Upper lobe of right lung (tissue), 1 donor: ENCODE measurements at regions of chr1 and their contacts with region 1.

Region 1: GRCh38 chr1:175154629-175155472 is 37.7 kb downstream of the KIAA0040 start:
- DNase-seq: peak; percentile 82
- ATAC-seq: peak; percentile 86
- H3K4me3 ChIP-seq: no peak overlapping the region
- H3K27ac ChIP-seq: no peak overlapping the region
- H3K4me1 ChIP-seq: peaks cover 4% of the 10 kb centered on the region
- H3K27me3 ChIP-seq: peaks cover 4% of the 10 kb centered on the region
- CTCF ChIP-seq: peak; percentile 91

Region 2: DNA sequence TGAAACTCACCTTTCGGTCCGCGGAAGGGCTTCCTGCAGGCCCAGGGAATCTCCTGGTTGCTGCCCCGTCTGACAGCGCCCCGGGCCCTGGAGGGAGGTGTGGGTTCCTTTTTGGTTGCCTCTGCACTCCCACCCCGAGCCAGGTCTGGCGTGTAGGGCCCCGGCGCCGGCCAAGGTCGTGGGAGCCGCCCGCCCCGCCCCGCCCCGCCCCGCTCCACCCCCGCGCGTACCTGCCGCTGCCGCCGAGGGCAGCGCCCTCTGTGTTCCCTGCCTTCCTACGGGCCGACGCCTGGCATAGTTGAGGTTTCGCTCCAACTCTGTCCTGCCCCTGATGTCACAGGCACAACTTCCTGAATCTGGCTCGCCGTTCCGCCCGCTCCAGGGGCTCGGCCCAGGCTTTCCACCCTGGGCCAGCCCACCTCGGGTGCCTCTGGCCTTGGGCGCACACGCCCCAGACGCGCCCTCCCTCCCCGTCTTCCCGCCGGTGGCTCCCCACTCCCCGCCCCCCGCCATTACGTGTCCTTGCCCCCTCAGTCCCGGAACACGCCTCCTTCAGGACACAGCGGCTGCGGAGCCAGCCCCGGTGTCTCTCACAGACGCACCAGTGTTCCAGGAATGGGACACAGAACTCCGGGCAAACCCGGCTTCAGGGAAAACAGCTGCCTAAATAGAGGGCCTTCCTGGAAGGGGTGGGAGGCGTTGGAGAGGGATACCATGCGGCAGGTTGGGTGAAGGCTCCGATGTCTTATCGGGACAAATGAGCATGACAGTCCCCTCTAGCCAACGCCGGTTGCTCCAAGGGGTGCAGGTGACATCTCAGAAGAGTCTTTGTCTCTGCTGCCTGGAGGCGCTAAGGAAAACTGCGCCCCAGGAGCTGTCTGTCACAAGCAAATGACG is 38.0 kb after region 1 on chr1 and contains the start of gene KIAA0040:
- intact Hi-C with region 1: loop called (anchors 5 kb)
- DNase-seq: peak; percentile 91
- ATAC-seq: peak; percentile 94
- H3K4me3 ChIP-seq: peak within 1 kb of the TSS; percentile 90
- H3K27ac ChIP-seq: peak within 1 kb of the TSS; percentile 96
- H3K4me1 ChIP-seq: peaks cover 32% of the 10 kb centered on the region
- H3K27me3 ChIP-seq: no peaks in the 10 kb centered on the region
- CTCF ChIP-seq: peak; percentile 10
- total RNA-seq, gene KIAA0040: 44.8 TPM

Region 3: DNA sequence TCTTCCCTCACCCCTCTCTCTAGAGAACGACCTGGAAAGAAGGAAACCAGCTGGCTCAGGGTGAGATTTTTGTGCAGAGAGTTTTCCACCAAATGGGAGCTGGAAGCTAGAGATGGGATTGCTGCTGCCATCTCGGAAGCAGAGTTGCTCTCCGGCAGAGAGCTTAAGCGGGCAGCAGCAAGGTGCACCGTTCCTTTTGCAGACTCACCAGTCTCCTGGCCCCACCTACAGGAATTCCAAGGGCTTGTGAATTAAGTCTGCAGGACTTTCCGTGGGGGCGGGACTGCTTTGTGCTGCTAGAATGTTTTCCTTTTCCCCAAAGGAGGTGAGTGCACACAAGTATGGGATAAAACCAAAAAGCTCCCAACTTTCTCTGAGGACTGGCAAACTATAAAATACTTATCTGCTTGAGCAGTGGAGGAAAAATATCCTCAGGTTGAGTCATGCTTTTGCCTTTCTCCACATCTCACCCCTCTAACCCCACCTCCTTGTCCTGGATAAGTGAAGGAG is 66.9 kb after region 1 on chr1:
- intact Hi-C with region 1: loop called (anchors 5 kb)
- DNase-seq: peak; percentile 66
- ATAC-seq: peak; percentile 87
- H3K4me3 ChIP-seq: no peak overlapping the region
- H3K27ac ChIP-seq: peak overlapping the region; percentile 67
- H3K4me1 ChIP-seq: peaks cover 23% of the 10 kb centered on the region
- H3K27me3 ChIP-seq: no peaks in the 10 kb centered on the region
- CTCF ChIP-seq: peak; percentile 42

Region 4: GRCh38 chr1:175319418-175320230 is 164.8 kb after region 1 on chr1:
- intact Hi-C with region 1: loop called (anchors 5 kb)
- DNase-seq: peak; percentile 80
- ATAC-seq: peak; percentile 95
- H3K4me3 ChIP-seq: no peak overlapping the region
- H3K27ac ChIP-seq: peak overlapping the region; percentile 9
- H3K4me1 ChIP-seq: peaks cover 27% of the 10 kb centered on the region
- H3K27me3 ChIP-seq: no peaks in the 10 kb centered on the region
- CTCF ChIP-seq: peak; percentile 92

Region 5: DNA sequence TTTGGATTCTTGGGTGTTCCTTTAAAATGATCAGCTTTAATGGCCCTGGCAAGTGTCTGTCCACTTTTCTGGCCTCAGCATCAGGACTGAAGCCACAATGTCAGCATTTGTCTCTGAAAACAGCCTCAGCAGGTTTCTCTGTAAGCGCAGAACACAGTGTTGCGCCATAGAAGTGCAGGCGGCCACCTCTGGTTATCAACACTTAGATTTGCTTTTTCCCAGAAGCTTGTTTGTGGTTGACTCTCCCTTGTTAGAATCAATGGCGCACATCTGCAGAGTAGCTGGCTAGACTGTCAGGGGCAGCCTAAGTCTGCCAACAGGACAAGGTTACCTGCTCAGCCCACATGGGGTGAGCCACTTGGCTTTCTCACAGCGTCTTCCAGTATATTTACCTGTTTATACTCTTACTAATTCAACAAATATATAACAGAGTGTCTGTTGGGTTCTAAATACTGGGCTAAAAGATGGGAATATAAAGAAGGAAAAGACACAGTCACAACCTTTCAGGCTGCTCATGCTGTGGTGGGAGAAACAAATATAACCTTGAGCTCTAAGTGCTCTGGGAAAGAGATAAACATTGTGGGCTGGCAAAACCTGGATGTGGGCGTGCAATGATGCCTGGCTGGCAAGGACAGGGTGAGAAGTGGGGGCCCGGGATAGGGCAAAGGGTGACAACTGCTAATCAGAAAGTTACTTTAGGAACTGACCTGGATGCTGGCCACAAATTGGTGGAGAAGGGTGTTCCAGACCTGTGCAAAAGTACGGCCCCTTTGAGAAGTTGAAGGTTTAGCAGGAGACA is 187.0 kb after region 1 on chr1:
- intact Hi-C with region 1: no loop called
- DNase-seq: no peak
- ATAC-seq: no peak
- H3K4me3 ChIP-seq: no peak overlapping the region
- H3K27ac ChIP-seq: no peak overlapping the region
- H3K4me1 ChIP-seq: no peaks in the 10 kb centered on the region
- H3K27me3 ChIP-seq: peaks cover 21% of the 10 kb centered on the region
- CTCF ChIP-seq: no peak